OCI-LY7 (cell line): ENCODE measurements at regions of chr14 and their contacts with region 1.

Region 1: GRCh38 chr14:55579724-55580469 is at the start of gene KTN1:
- DNase-seq: peak; percentile 89
- H3K4me3 ChIP-seq: peak within 1 kb of the TSS; percentile 94
- H3K27ac ChIP-seq: peak within 1 kb of the TSS; percentile 69
- H3K4me1 ChIP-seq: peaks cover 38% of the 10 kb centered on the region
- CTCF ChIP-seq: no peak
- total RNA-seq, gene KTN1: 60.6 and 90.0 TPM in 2 replicates

Region 2: DNA sequence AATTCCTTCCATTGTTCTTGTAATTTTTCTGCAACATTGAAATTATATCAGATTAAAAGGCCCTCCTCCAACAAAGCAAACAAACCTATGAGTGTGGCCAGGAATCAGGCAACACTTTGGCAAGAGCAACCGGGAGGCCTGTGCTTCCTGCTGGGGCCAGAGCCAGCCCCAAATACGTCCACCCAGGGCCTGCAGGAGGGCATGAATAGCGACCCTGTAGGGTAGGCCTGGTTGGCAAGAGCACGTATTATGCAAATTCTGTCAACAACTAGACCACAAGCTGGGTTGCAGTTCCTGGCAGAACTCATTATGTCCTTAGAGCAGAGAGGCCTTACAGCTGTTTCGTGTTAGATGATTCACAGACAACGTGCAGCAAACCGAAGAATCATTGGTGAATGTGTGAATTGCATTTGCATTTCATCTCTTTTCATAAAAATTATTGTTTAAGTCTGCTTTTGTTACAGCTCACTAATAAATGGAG is 477.7 kb before region 1 on chr14:
- CTCF ChIA-PET with region 1: no interaction called
- POLR2A ChIA-PET with region 1: no interaction called
- intact Hi-C with region 1: loop called (anchors 10 kb)
- DNase-seq: peak; percentile 94
- H3K4me3 ChIP-seq: peak overlapping the region; percentile 34
- H3K27ac ChIP-seq: peak overlapping the region; percentile 92
- H3K4me1 ChIP-seq: peaks cover 46% of the 10 kb centered on the region
- CTCF ChIP-seq: no peak

Region 3: DNA sequence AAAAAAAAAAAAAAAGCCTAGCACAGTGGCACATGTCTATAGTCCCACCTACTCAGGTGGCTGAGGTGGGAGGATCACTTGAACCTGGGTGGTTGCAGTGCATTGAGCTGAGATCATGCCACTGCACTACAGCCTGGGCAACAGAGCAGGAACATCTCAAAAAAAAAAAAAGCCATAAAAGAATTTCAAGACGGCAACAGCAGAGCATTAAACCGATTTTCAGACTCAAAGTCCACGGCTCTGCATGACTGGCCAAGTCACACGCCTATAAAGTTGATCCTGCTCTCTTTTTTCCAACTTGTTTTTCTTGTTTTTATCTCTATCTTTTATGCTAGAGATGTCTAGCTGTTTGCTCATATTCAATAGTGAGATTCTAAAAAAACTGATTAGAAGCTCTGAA is 263.3 kb before region 1 on chr14:
- CTCF ChIA-PET with region 1: no interaction called
- POLR2A ChIA-PET with region 1: no interaction called
- intact Hi-C with region 1: no loop called
- DNase-seq: no peak
- H3K4me3 ChIP-seq: no peak overlapping the region
- H3K27ac ChIP-seq: no peak overlapping the region
- H3K4me1 ChIP-seq: no peaks in the 10 kb centered on the region
- CTCF ChIP-seq: no peak

Region 4: DNA sequence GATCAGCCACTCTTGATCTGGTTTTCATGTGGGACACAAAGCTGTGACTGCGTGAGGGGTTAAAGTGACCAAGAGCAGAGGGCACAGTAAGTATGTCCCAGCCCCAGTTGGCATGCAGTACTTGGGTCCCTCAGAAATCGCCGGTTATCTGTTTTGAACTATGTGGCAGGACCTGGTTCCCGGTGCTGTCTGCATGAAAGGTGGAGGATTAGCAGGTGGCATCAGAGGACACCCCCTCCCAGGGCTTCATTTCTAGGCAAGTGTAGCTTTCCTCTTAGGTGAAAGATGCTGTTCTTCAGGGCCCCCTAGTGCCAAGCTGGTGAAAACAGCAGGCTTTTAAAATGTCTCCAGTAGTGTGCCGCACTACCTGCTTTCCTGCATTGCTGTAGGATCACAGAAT is 225.4 kb before region 1 on chr14:
- CTCF ChIA-PET with region 1: no interaction called
- POLR2A ChIA-PET with region 1: no interaction called
- intact Hi-C with region 1: no loop called
- DNase-seq: peak; percentile 68
- H3K4me3 ChIP-seq: no peak overlapping the region
- H3K27ac ChIP-seq: no peak overlapping the region
- H3K4me1 ChIP-seq: peaks cover 5% of the 10 kb centered on the region
- CTCF ChIP-seq: peak; percentile 82

Region 5: GRCh38 chr14:55593698-55594097 is 13.8 kb after region 1 on chr14:
- CTCF ChIA-PET with region 1: no interaction called
- POLR2A ChIA-PET with region 1: interaction called, 10 read pairs
- intact Hi-C with region 1: no loop called
- DNase-seq: no peak
- H3K4me3 ChIP-seq: no peak overlapping the region
- H3K27ac ChIP-seq: no peak overlapping the region
- H3K4me1 ChIP-seq: peaks cover 4% of the 10 kb centered on the region
- CTCF ChIP-seq: no peak

Region 6: GRCh38 chr14:55638665-55639064 is 58.8 kb after region 1 on chr14:
- CTCF ChIA-PET with region 1: no interaction called
- POLR2A ChIA-PET with region 1: no interaction called
- intact Hi-C with region 1: loop called (anchors 5 kb)
- DNase-seq: no peak
- H3K4me3 ChIP-seq: no peak overlapping the region
- H3K27ac ChIP-seq: no peak overlapping the region
- H3K4me1 ChIP-seq: no peaks in the 10 kb centered on the region
- CTCF ChIP-seq: no peak